ENCODE measurements at regions of chr4 and their contacts with region 1.

Region 1: DNA sequence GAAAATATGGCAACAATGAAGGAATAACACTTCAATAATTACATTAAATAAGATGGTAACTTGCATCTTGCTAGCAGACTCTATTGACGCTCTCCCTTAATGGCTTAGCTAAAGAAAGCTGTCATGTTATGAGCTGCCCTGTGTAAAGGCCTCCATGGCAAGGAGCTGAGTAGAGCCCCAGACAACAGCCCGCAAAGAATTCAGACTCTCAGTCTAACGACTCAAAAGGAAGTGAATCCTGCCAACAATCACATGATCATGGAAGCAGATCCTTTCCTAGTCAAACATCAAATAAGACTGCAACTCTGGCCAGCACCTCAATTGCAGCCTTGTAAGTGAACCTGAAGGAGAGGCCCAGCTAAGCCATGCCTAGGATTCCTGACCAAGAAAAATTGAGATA is 157.6 kb downstream of the MAB21L2 start:
- DNase-seq: no peak
- H3K4me3 ChIP-seq: no peak overlapping the region
- H3K27ac ChIP-seq: no peak overlapping the region
- H3K4me1 ChIP-seq: peaks cover 0 to 3% (median 0%) of the 10 kb centered on the region in 4 experiments; a peak in 1 of 7 replicates
- H3K27me3 ChIP-seq: peaks cover 0 to 1% (median 0%) of the 10 kb centered on the region in 4 experiments; a peak in 1 of 7 replicates
- CTCF ChIP-seq: no peak
- EP300 ChIP-seq: no peak
- POLR2A ChIP-seq: no peak
- RAD21 ChIP-seq: no peak

Region 2: GRCh38 chr4:150722908-150723362 is 16.7 kb before region 1 on chr4:
- CTCF ChIA-PET with region 1: interaction called, 16 read pairs
- POLR2A ChIA-PET with region 1: no interaction called
- DNase-seq: no peak
- H3K4me3 ChIP-seq: no peak overlapping the region
- H3K27ac ChIP-seq: no peak overlapping the region
- H3K4me1 ChIP-seq: no peaks in the 10 kb centered on the region
- H3K27me3 ChIP-seq: no peaks in the 10 kb centered on the region
- CTCF ChIP-seq: no peak
- EP300 ChIP-seq: no peak
- POLR2A ChIP-seq: no peak
- RAD21 ChIP-seq: peak; percentile 49 to 53

Region 3: GRCh38 chr4:151291485-151291884 is 551.9 kb after region 1 on chr4:
- CTCF ChIA-PET with region 1: no interaction called
- POLR2A ChIA-PET with region 1: no interaction called
- DNase-seq: no peak
- H3K4me3 ChIP-seq: no peak overlapping the region
- H3K27ac ChIP-seq: no peak overlapping the region
- H3K4me1 ChIP-seq: peaks cover 2 to 6% (median 3%) of the 10 kb centered on the region in 4 experiments; a peak in 4 of 7 replicates
- H3K27me3 ChIP-seq: no peaks in the 10 kb centered on the region
- CTCF ChIP-seq: no peak
- EP300 ChIP-seq: no peak
- POLR2A ChIP-seq: no peak
- RAD21 ChIP-seq: no peak